ENCODE measurements at regions of chr20 and their contacts with region 1.

Region 1: DNA sequence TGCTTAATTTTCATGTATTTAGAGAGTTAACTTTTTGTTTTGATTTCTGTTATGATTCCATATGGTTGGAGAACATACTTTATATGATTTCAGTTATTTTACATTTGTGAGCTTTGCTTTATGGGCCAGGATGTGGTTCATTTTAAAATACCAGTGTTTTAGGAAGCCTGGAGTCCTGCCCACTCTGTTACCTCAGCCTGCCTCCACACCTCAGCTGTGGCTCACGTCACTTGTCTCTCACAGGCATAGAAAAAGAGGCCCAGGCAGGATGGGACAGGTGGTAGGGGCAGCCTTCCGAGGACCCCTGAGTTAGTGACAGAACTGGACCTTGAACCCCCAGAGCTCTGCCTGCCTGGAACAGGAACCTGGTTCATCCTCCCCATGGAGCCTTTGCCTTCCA is 16.0 kb downstream of the PSMF1 start:
- DNase-seq: no peak

Region 2: DNA sequence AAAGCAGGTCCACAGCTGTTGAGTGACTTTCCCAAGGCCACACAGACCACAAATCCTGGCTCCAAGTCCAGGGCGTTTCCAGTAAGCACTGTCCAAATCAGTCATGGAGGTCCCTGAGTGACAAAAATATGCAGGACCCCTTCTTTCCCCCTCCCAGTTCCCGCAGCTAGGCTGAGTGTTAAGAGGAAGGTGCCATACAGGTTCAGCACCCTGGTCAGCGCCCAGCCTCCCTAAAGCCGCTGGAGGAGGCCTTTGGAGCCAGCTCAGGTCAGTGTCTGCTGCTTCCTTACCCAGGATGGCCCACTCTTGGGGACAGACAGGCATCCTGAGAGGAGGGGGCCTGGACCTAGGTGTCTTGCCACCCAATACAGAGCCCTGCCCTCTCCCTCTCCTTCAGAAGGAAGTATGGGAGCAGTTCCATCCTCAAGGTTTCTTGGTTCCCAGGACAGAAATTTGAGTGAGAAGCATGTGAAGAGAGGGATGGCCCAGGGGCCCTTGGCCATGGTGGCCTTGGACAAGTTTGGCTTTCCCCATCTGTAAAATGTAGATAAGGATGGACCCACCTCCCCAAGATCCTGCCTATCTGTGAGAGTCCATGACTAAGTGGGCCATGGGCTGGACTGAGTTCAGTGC is 37.2 kb after region 1 on chr20:
- intact Hi-C with region 1: loop called in 1 of 2 experiments (anchors 1 kb)
- DNase-seq: no peak

Measured in posterior vena cava (tissue), 2 donors.